ENCODE measurements at regions of chr4 and their contacts with region 1.

Region 1: GRCh38 chr4:122602277-122603142 is 18.4 kb downstream of the IL21 start:
- DNase-seq: peak; percentile 23
- CTCF ChIP-seq: peak; percentile 24

Region 2: DNA sequence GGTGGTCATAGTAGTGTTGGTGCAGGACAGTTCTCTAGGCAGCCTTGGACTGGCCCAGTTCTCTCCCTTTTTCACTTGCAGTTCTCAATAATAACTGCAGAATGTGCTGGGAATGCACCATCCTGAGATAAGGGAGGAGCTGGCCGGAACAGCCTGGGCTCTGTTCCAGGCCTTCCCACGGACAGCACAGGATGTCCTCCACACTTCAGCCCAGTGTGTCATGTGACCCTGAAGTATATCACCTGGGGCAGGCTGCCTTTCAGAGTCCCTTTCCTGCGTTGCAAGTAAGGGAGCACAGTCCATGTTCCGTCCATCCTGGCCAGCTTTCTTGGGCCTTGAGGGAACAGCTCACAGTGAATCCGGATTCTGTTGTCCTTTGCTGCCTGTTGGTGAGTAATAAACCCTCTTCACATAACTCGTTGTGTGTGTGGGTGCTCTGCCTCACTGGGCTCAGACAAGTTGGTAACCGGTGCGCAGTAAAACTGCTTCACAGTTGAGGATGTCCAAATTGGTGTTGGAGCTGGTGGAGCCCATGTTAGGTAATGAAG is 97.7 kb after region 1 on chr4:
- in situ Hi-C with region 1: loop called (anchors 10 kb)
- DNase-seq: no peak
- CTCF ChIP-seq: no peak

Region 3: GRCh38 chr4:122922877-122923511 is 320.5 kb after region 1 on chr4:
- in situ Hi-C with region 1: loop called (anchors 25 kb)
- DNase-seq: peak; percentile 84
- CTCF ChIP-seq: no peak

Measured in GM13976 (cell line).